ENCODE measurements at regions of chr10 and their contacts with region 1.

Region 1: DNA sequence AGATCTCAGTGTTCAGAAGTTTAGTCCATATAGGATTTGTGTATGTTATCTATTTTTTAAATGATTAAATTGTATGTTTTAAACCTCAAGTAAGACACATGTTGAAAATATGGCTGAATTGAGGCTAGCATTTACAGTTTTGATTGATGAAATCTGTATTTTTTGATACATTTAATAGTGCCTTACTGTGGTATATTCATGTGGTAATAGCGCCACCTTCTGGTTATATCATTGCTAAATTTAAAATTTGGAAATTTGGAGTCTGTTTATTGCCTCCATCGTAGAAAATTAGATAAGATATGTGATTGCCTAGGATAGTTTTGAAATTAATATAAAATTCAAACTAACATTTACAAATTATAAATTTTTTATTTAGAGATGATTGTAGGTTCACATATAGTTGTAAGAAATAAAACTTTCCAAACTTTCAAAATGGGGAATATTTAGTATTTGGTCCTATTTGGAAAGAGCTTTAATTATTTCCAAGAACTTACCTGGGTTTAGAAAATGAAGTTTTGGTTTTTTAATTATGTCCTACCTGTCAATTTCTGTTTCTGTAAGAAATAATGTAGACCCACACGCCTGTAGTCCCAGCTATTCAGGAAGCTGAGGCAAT is 19.1 kb upstream of the ARMS2 start:
- DNase-seq: no peak
- H3K4me3 ChIP-seq: no peak overlapping the region
- H3K27ac ChIP-seq: no peak overlapping the region
- H3K4me1 ChIP-seq: no peaks in the 10 kb centered on the region
- H3K27me3 ChIP-seq: no peaks in the 10 kb centered on the region
- CTCF ChIP-seq: peak; percentile 56 to 70 (median 68)

Region 2: GRCh38 chr10:122342293-122343134 is 92.8 kb before region 1 on chr10:
- intact Hi-C with region 1: loop called (anchors 2 kb)
- DNase-seq: no peak
- H3K4me3 ChIP-seq: no peak overlapping the region
- H3K27ac ChIP-seq: no peak overlapping the region
- H3K4me1 ChIP-seq: no peaks in the 10 kb centered on the region
- H3K27me3 ChIP-seq: no peaks in the 10 kb centered on the region
- CTCF ChIP-seq: peak; percentile 60 to 82 (median 69)

Region 3: GRCh38 chr10:122565728-122566206 is 130.4 kb after region 1 on chr10:
- intact Hi-C with region 1: loop called (anchors 2 kb)
- DNase-seq: peak in 1 of 2 donors; percentile 87
- H3K4me3 ChIP-seq: peak overlapping the region; percentile 4 to 49
- H3K27ac ChIP-seq: no peak overlapping the region
- H3K4me1 ChIP-seq: no peaks in the 10 kb centered on the region
- H3K27me3 ChIP-seq: no peaks in the 10 kb centered on the region
- CTCF ChIP-seq: peak; percentile 70 to 88 (median 79)

Region 4: DNA sequence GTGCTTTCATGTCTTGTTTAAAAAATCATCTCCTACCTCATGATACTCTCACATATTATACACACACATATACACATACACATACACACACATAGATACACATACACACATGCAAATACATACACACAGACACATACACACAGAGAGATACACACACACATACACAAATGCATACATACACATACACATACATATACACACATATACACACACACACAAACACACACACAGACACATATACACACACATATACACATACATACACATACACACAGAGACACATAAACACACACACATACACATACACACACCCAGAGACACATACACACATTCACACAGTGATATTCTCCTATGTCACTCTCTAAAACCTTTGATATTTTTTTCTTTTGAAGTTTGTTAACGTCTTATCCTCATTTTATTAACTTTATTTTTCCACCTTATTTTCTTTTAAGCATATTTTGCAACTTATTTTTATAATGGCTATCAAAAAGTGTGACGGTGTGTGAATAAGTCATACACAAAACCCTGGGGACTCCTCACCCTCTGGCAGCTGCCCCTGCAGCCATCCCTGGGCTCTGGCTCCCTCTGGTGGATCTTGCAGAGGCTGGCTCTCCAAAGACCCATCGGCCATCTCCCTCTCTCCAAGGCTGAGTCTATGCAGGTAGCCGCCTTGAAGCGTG is 268.3 kb after region 1 on chr10:
- intact Hi-C with region 1: loop called (anchors 10 kb)
- DNase-seq: peak in 1 of 2 donors; percentile 67
- H3K4me3 ChIP-seq: no peak overlapping the region
- H3K27ac ChIP-seq: no peak overlapping the region
- H3K4me1 ChIP-seq: no peaks in the 10 kb centered on the region
- H3K27me3 ChIP-seq: no peaks in the 10 kb centered on the region
- CTCF ChIP-seq: peak; percentile 36 to 72 (median 42)

Measured in ascending aorta (tissue), 2 donors.